ENCODE measurements at regions of chr11 and their contacts with region 1.

Region 1: DNA sequence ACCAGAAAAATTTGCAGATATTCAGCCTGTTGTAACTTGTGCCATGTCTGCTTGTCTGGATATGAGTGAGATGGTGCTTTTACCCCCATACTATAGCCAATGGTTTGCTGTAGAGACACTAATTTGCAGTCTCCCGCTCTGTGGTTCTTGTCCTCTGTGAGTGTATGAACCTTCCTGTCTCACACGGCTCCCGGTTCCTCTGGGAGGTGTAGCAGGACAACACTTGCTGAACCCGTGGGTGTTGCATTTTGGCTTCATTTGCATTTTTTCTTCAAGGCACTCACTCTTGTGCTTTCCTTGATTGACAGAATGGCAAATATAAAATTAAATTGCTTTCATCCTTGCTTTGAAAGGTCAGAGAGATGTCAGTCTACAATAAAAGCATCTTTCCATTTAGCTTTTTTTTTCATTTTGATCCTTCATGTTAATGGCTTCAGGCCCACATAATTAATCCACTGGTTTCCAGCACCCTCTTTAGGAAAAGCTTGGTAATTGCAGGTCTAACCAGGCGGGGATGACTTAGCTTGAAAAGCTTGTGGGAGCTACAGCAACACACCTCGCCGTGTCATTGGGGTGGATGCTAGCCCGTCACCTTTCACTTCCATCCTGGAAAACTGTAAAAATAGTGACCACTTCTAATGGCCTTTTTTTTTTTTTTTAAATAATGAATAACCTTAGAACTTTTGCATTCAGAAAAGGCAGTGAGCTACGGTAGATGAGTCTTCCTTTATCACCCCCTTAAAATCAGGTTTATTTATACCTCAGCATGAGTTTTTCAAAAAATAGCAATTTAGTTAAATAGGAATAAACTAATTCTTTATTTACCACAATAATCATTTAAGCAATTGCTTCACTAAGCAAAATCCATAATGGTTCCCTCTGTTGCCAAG is 27.4 kb upstream of the ST14 start:
- DNase-seq: peak; percentile 83
- H3K4me3 ChIP-seq: no peak overlapping the region
- H3K27ac ChIP-seq: no peak overlapping the region
- H3K4me1 ChIP-seq: peaks cover 0 to 6% of the 10 kb centered on the region in 2 experiments; a peak in 1 of 4 replicates
- H3K27me3 ChIP-seq: no peaks in the 10 kb centered on the region
- CTCF ChIP-seq: peak; percentile 87
- EP300 ChIP-seq: no peak
- RAD21 ChIP-seq: peak; percentile 95

Region 2: GRCh38 chr11:129917231-129917630 is 215.0 kb before region 1 on chr11:
- CTCF ChIA-PET with region 1: interaction called, 150 read pairs
- POLR2A ChIA-PET with region 1: interaction called, 3 read pairs
- DNase-seq: no peak
- H3K4me3 ChIP-seq: no peak overlapping the region
- H3K27ac ChIP-seq: no peak overlapping the region
- H3K4me1 ChIP-seq: no peaks in the 10 kb centered on the region
- H3K27me3 ChIP-seq: no peaks in the 10 kb centered on the region
- CTCF ChIP-seq: no peak
- EP300 ChIP-seq: no peak
- RAD21 ChIP-seq: no peak

Region 3: DNA sequence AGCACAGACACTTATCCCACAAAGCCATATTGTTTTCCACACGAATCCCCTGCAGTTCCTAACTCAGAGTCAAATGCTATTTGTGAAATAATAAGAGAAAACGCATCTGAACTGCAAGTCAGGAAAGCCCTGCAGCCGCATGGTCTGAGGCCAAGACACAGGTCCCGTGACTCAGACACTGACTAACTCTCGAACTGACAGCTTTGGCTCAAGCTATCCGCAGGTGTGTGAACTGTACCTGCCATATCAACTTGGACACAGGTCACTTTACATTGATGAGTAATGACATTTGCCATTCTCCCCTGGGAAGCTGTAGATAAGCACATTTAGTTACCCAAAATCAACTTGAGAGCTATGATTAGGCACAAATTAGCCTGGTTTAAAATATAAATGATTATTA is 201.9 kb before region 1 on chr11:
- CTCF ChIA-PET with region 1: interaction called, 150 read pairs
- POLR2A ChIA-PET with region 1: no interaction called
- DNase-seq: no peak
- H3K4me3 ChIP-seq: no peak overlapping the region
- H3K27ac ChIP-seq: no peak overlapping the region
- H3K4me1 ChIP-seq: peaks cover 0 to 6% of the 10 kb centered on the region in 2 experiments; a peak in 1 of 4 replicates
- H3K27me3 ChIP-seq: no peaks in the 10 kb centered on the region
- CTCF ChIP-seq: no peak
- EP300 ChIP-seq: no peak
- RAD21 ChIP-seq: no peak

Region 4: DNA sequence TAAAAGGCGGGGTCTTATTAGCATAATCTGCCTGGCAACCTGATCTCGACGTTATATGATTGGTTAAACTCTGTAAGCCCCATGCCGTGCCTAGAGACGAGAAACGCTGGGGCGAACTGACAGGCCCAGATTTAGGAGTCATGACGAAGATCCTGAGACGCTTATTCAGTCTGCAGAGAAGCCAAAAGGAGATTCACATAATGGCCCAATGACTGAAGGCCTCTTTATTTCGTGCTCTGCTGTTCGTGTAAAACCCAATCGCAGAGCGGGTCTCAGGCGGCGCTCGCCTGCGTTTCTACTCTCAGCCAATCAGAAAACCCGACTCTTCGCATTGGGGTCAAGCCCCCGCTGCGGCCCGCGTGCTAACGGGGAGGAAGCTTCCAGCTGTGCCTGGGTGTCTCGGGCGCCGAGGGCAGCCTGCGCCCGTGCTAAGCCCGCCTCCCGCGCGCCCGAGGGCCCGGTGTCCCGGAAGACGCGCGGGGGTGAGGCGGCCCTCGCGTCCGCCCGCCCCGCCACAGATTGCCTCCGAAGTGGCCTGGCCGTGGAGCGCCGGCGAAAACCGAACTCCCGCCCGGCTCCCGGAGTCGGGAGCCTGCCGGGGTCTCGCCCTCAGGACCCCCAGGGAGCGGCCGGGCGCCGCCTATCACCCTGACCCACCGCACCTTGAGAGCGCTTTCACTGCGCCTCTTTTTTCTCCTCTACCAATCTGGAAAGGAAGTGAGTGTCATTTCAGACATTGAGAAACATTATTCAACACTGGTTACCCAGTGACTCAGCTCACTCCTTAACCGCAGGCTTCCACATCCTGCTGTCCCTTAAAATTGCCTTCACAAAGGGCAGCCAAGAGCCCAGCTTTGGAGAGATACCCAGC is 129.1 kb before region 1 on chr11:
- CTCF ChIA-PET with region 1: interaction called, 11 read pairs
- POLR2A ChIA-PET with region 1: interaction called, 10 read pairs
- DNase-seq: peak; percentile 98
- H3K4me3 ChIP-seq: peak overlapping the region; percentile 69 to 83
- H3K27ac ChIP-seq: peak overlapping the region; percentile 99 to 100
- H3K4me1 ChIP-seq: peaks cover 0 to 3% of the 10 kb centered on the region in 2 experiments; a peak in 3 of 4 replicates
- H3K27me3 ChIP-seq: no peaks in the 10 kb centered on the region
- CTCF ChIP-seq: no peak
- EP300 ChIP-seq: peak; percentile 39 to 90; a peak in 1 of 4 replicates
- RAD21 ChIP-seq: no peak

Region 5: DNA sequence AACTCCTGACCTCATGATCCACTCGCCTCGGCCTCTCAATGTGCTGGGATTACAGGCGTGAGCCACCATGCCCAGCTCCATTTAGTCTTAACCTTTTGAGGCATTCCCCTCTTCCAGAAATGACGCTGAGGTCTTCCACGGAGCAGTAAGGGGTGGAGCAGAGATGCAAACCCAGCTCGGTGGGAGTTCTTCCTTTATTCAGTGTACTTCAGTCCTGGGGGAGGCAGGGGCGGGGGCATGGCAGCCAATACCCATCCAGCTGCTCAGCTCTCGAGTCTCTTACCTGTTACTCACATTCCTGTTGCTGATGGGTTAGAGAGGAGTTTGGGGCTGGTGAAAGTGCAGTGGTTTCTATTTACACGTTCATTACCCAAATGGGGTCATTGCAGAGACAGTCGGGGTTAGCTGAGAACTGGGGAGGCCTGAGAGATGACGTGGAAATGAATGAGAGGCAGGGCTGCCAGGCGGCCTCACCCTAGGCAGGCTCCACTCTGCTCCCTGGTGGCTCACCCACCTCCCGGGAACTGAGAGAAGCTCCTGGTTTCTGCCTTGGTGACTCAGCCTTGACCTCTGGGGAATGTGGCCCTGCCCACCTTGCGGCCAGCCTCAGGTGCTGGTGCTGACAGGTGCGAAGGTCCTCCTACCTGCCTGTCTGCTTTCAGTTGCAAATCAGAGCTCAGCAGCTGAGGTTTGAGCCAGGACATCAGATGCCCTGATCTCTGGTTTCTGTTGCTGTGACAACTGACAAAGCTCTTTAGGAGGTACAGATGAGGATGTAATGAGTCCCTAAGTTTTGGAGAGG is 14.0 kb after region 1 on chr11:
- CTCF ChIA-PET with region 1: interaction called, 12 read pairs
- POLR2A ChIA-PET with region 1: no interaction called
- DNase-seq: no peak
- H3K4me3 ChIP-seq: no peak overlapping the region
- H3K27ac ChIP-seq: no peak overlapping the region
- H3K4me1 ChIP-seq: no peaks in the 10 kb centered on the region
- H3K27me3 ChIP-seq: no peaks in the 10 kb centered on the region
- CTCF ChIP-seq: peak; percentile 13; the same call in 1 of the 2 replicates
- EP300 ChIP-seq: no peak
- RAD21 ChIP-seq: no peak

Region 6: DNA sequence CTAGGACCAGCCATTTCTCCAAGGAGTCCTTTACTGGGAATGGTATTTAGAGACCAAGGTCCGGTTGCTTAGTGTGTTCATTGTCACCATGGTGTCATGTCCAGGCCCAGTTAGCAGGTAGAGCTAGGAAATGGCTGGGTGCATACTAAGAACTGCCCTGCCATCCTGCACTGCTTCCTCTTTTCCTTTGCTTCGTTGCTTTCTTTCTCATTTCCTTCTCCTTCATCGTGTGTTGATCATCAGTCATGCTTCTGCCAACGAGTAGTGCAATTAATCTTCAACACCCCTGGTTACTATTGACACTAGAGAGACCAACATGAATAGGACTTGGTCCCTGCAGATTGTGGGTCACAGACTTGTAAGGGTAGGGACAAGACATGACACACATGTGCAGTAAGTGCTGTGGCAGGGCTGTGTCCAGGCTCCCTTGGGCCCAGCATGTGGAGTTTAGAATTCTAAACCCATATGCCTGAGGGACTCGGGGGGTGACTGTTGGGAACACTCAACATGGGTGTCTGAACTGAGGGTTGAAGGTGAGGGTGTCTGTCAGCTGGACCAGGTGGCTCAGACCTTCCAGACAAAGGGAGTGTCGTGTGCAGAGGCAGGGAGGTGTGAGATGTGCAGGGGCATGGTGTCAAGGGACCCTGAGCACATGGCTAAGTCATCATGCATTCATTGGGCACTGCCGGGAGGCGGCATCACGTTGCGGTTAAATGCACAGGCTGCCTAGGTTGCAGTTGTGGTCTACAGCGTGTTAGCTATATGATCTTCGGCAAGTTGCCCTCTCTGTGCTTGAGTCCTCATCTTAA is 70.0 kb after region 1 on chr11:
- CTCF ChIA-PET with region 1: no interaction called
- POLR2A ChIA-PET with region 1: no interaction called
- DNase-seq: no peak
- H3K4me3 ChIP-seq: no peak overlapping the region
- H3K27ac ChIP-seq: no peak overlapping the region
- H3K4me1 ChIP-seq: no peaks in the 10 kb centered on the region
- H3K27me3 ChIP-seq: peaks cover 21% of the 10 kb centered on the region; the same call in 1 of the 2 replicates
- CTCF ChIP-seq: no peak
- EP300 ChIP-seq: no peak
- RAD21 ChIP-seq: no peak